WTC11 (cell line): ENCODE measurements at regions of chr2 and their contacts with region 1.

Region 1: GRCh38 chr2:234500394-234501006 is 3.6 kb upstream of the ARL4C start:
- DNase-seq: peak; percentile 46
- ATAC-seq: peak; percentile 24
- H3K4me3 Mint-ChIP-seq: no peak overlapping the region
- H3K27ac Mint-ChIP-seq: no peak overlapping the region
- H3K4me1 Mint-ChIP-seq: peaks cover 23% of the 10 kb centered on the region
- H3K27me3 Mint-ChIP-seq: peaks cover 25% of the 10 kb centered on the region
- CTCF ChIP-seq: no peak

Region 2: DNA sequence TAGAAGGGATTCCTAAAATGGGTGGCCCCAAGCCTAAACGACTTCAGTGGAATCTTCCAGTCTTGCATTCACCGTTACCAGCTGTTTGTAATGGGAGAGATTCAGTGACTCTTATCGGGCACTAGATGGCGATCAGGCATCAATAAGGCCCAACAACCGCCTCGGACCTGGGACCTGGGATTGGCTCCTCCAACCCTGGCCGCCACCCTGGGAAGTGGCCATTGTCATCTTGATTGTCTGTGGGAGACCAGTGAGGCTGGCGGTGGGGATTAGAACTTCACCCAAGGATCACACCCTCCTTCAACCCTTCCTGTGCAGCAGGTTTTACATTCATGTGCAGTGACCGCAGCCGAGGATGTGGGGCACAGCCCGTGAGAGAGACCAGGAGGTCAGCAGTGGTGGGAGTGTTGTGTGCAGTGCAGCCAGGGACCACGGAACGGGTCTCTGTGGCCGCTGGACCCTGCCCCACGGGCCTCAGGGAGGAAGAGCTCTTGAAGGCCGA is 364.7 kb before region 1 on chr2:
- CTCF ChIA-PET with region 1: interaction called, 13 read pairs
- POLR2A ChIA-PET with region 1: interaction called, 3 read pairs
- DNase-seq: peak; percentile 76
- ATAC-seq: peak; percentile 98
- H3K4me3 Mint-ChIP-seq: no peak overlapping the region
- H3K27ac Mint-ChIP-seq: no peak overlapping the region
- H3K4me1 Mint-ChIP-seq: peaks cover 16% of the 10 kb centered on the region
- H3K27me3 Mint-ChIP-seq: no peaks in the 10 kb centered on the region; the same call in 1 of the 2 replicates
- CTCF ChIP-seq: peak; percentile 40

Region 3: GRCh38 chr2:234288974-234289455 is 211.5 kb before region 1 on chr2:
- CTCF ChIA-PET with region 1: interaction called, 29 read pairs
- POLR2A ChIA-PET with region 1: interaction called, 4 read pairs
- DNase-seq: peak; percentile 85
- ATAC-seq: peak; percentile 94
- H3K4me3 Mint-ChIP-seq: no peak overlapping the region
- H3K27ac Mint-ChIP-seq: no peak overlapping the region
- H3K4me1 Mint-ChIP-seq: peaks cover 14% of the 10 kb centered on the region
- H3K27me3 Mint-ChIP-seq: no peaks in the 10 kb centered on the region
- CTCF ChIP-seq: peak; percentile 84

Region 4: GRCh38 chr2:234514873-234515638 is 14.6 kb after region 1 on chr2:
- CTCF ChIA-PET with region 1: no interaction called
- POLR2A ChIA-PET with region 1: no interaction called
- DNase-seq: no peak
- ATAC-seq: peak; percentile 44
- H3K4me3 Mint-ChIP-seq: no peak overlapping the region
- H3K27ac Mint-ChIP-seq: no peak overlapping the region
- H3K4me1 Mint-ChIP-seq: peaks cover 5% of the 10 kb centered on the region
- H3K27me3 Mint-ChIP-seq: no peaks in the 10 kb centered on the region
- CTCF ChIP-seq: no peak

Region 5: DNA sequence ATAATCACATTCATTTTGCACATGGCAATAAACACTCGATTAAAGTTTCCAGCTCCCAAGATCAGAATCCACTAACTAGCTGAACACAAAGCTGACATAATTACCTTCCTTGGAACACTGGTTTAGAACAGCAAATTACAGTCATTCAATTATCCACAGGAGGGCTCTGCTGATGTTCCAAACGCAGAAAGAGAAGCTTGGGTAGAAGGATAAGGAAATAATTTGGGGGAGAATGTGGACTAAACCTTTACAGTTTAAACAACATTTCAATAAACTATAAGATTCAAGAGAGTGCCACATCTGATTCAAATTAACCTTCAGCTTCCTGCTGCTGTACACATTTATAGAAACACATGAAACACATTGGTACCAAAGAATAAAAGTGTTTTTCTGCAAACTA is 64.2 kb after region 1 on chr2:
- CTCF ChIA-PET with region 1: no interaction called
- POLR2A ChIA-PET with region 1: no interaction called
- DNase-seq: no peak
- ATAC-seq: no peak
- H3K4me3 Mint-ChIP-seq: no peak overlapping the region
- H3K27ac Mint-ChIP-seq: no peak overlapping the region
- H3K4me1 Mint-ChIP-seq: peaks cover 26% of the 10 kb centered on the region
- H3K27me3 Mint-ChIP-seq: peaks cover 8% of the 10 kb centered on the region
- CTCF ChIP-seq: no peak